Right ventricle myocardium superior (tissue), 1 donor: ENCODE measurements at regions of chr7 and their contacts with region 1.

Region 1: GRCh38 chr7:103369430-103369829 is 22.0 kb downstream of the PSMC2 start:
- DNase-seq: no peak
- ATAC-seq: no peak

Region 2: GRCh38 chr7:103116991-103117390 is 252.4 kb before region 1 on chr7:
- intact Hi-C with region 1: no loop called
- DNase-seq: no peak
- ATAC-seq: no peak

Region 3: DNA sequence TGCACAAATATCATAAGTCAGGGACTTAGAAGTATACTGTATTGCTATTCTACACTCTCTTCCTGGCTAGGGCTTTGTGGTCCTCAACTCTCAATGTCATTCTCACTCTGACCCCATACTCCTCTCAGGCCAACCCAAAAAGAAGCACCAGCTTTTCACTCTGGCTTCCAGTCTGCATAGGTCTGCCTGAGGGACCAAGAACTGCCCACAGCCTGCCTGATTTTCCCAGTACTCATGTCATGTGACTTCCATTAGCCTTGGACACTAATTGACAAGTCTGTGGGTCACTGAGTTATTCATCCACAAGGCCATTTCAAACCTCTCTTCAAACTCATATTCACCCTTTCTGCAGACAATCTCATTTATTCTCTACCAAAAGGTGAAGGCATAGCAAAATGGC is 52.4 kb before region 1 on chr7:
- intact Hi-C with region 1: loop called (anchors 10 kb)
- DNase-seq: no peak
- ATAC-seq: no peak